IMR-90 (cell line): ENCODE measurements at regions of chr10 and their contacts with region 1.

Region 1: DNA sequence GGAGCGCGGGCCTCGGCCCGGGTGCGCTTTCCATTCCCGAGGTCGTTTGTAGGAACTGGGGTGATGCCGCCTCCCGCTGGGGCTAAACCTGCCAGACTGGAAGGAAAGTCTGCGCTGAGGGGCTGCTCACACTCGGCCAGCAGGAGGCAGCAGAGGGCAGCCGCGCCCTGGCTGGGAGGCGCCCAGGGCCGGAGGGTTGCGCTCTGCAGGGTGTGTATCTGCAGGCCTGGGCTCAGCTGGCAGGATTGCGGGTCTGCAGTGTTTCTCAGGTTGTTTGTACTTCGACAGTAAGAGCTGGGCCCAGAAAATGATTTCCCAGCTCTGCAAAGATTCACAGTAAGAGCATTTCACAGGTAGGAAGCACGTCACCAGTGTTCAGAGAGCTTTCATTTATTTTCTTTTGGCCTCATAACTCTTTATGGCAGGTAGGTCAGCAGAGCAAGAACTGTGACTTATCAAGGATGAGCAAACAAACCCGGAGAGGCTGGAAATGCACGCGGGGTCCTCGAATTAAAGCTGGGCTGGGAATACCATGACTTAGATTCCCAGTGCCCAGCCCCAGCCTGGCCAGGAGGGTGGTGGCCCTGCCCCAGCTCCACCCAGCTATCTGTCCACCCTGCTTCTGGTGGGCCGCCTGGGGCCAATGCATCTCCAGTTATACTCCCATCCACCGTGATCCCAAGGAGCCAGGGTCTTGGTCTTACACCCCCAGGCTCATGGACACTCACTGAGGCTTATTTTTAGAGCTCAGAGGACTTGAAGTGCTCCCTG is 15.2 kb upstream of the PPP2R2D start:
- DNase-seq: peak; percentile 39
- ATAC-seq: peak; percentile 100
- H3K4me3 ChIP-seq: no peak overlapping the region
- H3K27ac ChIP-seq: no peak overlapping the region
- H3K4me1 ChIP-seq: no peaks in the 10 kb centered on the region
- H3K27me3 ChIP-seq: peaks cover 9% of the 10 kb centered on the region; the same call in 1 of the 2 replicates
- CTCF ChIP-seq: peak; percentile 95
- POLR2A ChIP-seq: no peak
- RAD21 ChIP-seq: peak; percentile 94

Region 2: GRCh38 chr10:131546086-131546810 is 339.3 kb before region 1 on chr10:
- CTCF ChIA-PET with region 1: no interaction called
- POLR2A ChIA-PET with region 1: no interaction called
- dilution Hi-C with region 1: no loop called
- in situ Hi-C with region 1: no loop called
- intact Hi-C with region 1: no loop called
- DNase-seq: no peak
- ATAC-seq: no peak
- H3K4me3 ChIP-seq: no peak overlapping the region
- H3K27ac ChIP-seq: no peak overlapping the region
- H3K4me1 ChIP-seq: no peaks in the 10 kb centered on the region
- H3K27me3 ChIP-seq: no peaks in the 10 kb centered on the region
- CTCF ChIP-seq: no peak
- POLR2A ChIP-seq: no peak
- RAD21 ChIP-seq: no peak

Region 3: GRCh38 chr10:132133005-132133404 is 247.4 kb after region 1 on chr10:
- CTCF ChIA-PET with region 1: no interaction called
- POLR2A ChIA-PET with region 1: no interaction called
- dilution Hi-C with region 1: no loop called
- in situ Hi-C with region 1: loop called (anchors 10 kb)
- intact Hi-C with region 1: no loop called
- DNase-seq: no peak
- ATAC-seq: no peak; the same call in 1 of the 2 replicates
- H3K4me3 ChIP-seq: no peak overlapping the region
- H3K27ac ChIP-seq: no peak overlapping the region
- H3K4me1 ChIP-seq: no peaks in the 10 kb centered on the region
- H3K27me3 ChIP-seq: peaks cover 5% of the 10 kb centered on the region
- CTCF ChIP-seq: no peak
- POLR2A ChIP-seq: no peak
- RAD21 ChIP-seq: no peak

Region 4: DNA sequence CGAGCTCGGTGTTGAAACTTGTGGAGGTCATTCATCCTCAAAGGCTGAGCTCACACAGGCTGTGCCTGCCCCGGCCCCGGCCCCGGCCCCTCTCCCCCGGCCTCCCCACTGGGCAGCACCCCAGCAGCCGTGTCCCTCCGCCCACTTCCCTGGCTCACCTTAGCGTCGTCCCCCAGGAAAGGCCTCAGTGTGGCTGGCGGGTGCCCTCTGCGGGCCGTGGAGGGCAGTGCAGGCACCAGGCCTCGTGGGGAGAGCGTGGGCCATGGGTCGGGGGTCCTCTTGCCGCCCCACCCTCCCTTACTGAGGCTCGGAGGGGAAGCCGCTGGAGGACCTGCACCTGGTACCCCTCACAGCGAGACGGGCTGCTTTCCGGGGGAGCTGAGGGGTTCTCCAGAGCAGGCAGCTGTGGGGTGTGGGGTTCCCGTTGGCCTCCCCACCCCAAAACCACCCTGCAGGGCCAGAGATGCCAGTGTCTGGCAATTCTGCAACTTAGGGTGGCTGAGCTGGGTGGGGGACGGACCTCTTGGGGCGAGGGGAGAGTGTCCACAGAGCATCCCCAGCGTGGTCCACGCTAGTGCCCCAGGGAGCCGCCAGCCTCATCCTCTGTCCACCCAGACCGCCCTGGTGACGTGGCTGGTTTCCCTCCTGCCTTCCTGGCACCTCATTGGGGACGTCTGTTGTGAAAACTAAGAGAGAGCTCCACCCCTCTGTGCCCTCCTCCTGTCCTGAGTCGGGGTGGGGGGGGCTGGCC is 257.0 kb after region 1 on chr10:
- CTCF ChIA-PET with region 1: interaction called, 6 read pairs
- POLR2A ChIA-PET with region 1: no interaction called
- dilution Hi-C with region 1: no loop called
- in situ Hi-C with region 1: loop called (anchors 10 kb)
- intact Hi-C with region 1: loop called (anchors 1 kb)
- DNase-seq: no peak
- ATAC-seq: peak; percentile 94
- H3K4me3 ChIP-seq: no peak overlapping the region
- H3K27ac ChIP-seq: no peak overlapping the region
- H3K4me1 ChIP-seq: no peaks in the 10 kb centered on the region
- H3K27me3 ChIP-seq: peaks cover 6% of the 10 kb centered on the region; the same call in 1 of the 2 replicates
- CTCF ChIP-seq: peak; percentile 60
- POLR2A ChIP-seq: no peak
- RAD21 ChIP-seq: peak; percentile 66

Region 5: DNA sequence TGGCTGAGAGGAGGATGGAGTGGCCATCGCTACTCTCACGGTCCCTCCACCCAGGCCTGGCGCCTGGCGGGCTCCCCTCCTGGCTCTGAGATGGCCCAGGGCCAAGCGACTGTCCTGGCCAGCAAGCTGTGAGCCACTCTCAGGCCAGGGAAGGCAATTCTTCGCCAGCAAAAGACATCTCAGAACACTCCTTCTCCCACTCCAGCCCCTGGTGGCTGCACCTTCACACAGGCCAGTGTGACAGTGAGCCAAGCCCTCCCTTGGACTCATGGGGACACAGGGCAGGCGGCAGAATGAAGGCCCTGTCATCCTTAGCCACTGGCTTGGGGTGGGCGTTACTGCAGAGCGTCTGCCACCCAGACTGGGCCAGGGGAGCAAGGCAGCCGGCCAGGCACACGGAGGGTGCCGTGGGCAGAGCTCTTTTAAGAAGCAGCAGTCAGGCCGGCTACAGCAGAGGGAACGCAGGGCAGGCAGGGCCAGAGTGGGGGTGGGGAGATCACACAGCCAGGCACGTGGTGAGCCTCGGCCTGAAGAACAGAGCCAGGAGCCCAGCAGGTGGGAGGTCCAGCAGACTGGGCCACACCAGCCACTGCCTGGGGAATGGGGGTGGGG is 407.7 kb after region 1 on chr10:
- CTCF ChIA-PET with region 1: no interaction called
- POLR2A ChIA-PET with region 1: no interaction called
- dilution Hi-C with region 1: no loop called
- in situ Hi-C with region 1: no loop called
- intact Hi-C with region 1: no loop called
- DNase-seq: no peak
- ATAC-seq: no peak
- H3K4me3 ChIP-seq: no peak overlapping the region
- H3K27ac ChIP-seq: no peak overlapping the region
- H3K4me1 ChIP-seq: no peaks in the 10 kb centered on the region
- H3K27me3 ChIP-seq: peaks cover 7% of the 10 kb centered on the region
- CTCF ChIP-seq: no peak
- POLR2A ChIP-seq: no peak
- RAD21 ChIP-seq: no peak

Region 6: DNA sequence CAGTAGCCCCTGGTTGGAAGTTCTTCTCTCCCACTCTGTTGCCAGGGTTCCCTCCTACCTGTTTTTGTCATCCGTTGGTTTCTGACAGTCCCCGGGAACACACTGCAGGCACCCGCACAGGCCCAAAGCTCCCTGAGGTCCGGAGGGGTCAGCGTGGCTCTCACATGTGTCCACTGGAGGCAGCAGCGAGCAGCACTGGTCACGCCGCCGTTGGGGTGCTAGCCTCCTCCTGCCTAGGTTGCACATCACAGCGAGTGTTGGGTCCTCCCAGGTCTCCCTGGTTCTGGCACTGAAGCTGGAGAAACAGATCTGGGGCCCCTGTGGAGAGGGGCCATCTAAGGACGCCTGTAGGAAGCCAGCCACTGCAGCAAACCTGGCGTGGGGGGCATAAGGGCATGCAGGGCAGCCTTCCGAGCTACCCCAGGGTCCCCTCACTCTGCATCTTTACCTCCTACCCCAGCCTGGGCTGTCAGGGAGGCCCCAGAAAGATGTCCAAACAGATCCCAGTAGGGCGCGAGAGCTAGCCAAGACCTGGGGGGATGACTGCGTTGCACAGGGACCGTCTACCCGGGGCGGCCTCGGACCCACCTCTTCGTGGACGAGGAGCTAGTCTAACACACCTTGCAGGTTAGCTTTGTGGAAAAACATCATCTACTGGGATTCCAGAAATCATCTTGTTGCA is 475.3 kb after region 1 on chr10:
- CTCF ChIA-PET with region 1: no interaction called
- POLR2A ChIA-PET with region 1: no interaction called
- dilution Hi-C with region 1: no loop called
- in situ Hi-C with region 1: no loop called
- intact Hi-C with region 1: no loop called
- DNase-seq: no peak
- ATAC-seq: peak; percentile 46; the same call in 1 of the 2 replicates
- H3K4me3 ChIP-seq: no peak overlapping the region
- H3K27ac ChIP-seq: no peak overlapping the region
- H3K4me1 ChIP-seq: no peaks in the 10 kb centered on the region
- H3K27me3 ChIP-seq: no peaks in the 10 kb centered on the region
- CTCF ChIP-seq: peak; percentile 33
- POLR2A ChIP-seq: no peak
- RAD21 ChIP-seq: no peak